Activated CD8-positive, alpha-beta T cell treated with anti-CD3 and anti-CD28 coated beads for 36 hours (primary cell): ENCODE measurements at regions of chr6 and their contacts with region 1.

Region 1: GRCh38 chr6:2353412-2354137 is 108.2 kb upstream of the GMDS start:
- DNase-seq: peak; percentile 80
- ATAC-seq: peak; percentile 56
- H3K4me3 Mint-ChIP-seq: no peak overlapping the region
- H3K27ac Mint-ChIP-seq: no peak overlapping the region
- H3K4me1 Mint-ChIP-seq: no peaks in the 10 kb centered on the region
- H3K27me3 Mint-ChIP-seq: no peaks in the 10 kb centered on the region
- CTCF ChIP-seq: peak; percentile 88

Region 2: DNA sequence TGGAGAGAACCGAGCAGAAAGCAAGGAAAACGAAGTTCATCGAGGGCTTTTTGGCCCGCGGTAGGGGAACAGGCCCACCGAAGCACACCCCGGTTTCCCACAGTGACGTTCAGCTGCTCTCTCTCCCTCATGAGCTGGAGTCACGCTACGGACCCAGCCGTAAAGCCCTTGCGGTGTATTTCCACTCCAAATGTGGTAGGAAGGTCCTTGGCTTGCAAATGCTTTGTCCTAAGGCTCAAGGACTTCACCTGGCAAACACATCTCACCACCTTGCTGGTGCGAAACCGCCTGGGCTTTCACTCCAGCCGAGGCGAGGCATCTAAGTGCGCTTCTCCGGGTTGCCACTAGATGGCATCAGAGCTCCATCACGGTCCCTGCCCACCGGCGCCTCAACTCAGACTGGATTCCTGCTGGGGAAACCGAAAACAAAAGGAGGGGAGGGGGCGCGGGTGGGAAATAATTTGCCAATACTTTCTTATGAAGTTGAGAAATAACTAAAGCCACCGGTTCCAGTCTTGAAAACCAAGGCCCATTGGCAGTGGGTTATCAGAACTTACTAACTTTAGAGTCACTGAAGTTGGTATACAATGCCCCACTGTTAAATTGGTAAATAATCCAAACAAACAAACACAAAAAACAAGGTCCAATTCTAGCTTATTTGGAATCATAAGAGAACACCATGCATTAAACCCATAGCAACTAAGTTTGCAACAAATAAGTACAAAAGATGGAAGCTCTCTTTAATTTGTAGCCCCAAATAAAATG is 757.3 kb before region 1 on chr6:
- CTCF ChIA-PET with region 1: interaction called, 23 read pairs
- POLR2A ChIA-PET with region 1: no interaction called
- intact Hi-C with region 1: loop called (anchors 5 kb)
- DNase-seq: peak; percentile 67
- ATAC-seq: peak; percentile 80
- H3K4me3 Mint-ChIP-seq: no peak overlapping the region
- H3K27ac Mint-ChIP-seq: no peak overlapping the region
- H3K4me1 Mint-ChIP-seq: no peaks in the 10 kb centered on the region
- H3K27me3 Mint-ChIP-seq: peaks cover 48% of the 10 kb centered on the region
- CTCF ChIP-seq: peak; percentile 92

Region 3: DNA sequence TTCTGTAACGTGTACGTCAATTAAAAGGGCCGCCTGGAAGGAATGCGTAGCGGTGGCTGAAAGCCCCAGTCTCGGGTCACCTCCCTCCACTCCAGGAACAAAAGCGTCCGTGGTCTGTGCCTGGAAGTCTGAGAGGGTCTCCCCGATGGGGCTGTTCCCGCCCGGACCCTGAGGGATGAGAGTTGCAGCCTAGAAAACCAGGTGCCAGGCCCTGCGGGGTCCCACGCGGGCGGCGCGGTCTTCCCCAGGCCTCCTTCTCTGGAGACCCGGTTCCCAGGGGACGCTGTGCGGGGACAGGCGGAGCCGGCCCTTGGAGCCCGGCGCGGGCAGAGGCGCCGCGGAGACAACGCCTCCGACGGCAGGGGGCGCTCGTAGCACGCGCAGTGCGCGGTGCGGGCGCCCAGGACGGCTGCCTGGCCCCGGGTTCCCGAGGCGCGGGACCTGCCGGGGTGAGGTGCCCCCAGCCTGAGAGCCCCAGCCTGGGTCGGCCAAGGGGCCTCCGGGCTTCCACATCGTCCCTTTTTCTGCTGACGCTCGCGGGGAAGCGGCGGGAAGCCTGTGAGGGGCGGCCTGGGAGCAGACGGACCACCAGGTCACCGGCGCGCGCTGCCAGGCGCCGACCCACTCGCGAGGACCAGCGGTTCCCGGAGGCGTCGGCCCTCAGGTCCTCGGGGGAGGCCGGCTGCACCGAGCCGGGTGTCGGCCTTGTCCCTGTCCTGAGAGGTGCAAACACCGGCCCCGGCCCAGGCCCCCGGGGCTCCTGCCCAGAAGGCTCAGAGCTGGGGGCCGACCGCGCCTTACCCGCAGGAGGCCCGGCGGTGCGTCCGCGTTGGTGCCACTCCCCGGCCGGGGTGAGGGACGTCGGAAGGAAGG is 749.2 kb before region 1 on chr6:
- CTCF ChIA-PET with region 1: interaction called, 11 read pairs
- POLR2A ChIA-PET with region 1: no interaction called
- intact Hi-C with region 1: loop called (anchors 5 kb)
- DNase-seq: peak; percentile 58
- ATAC-seq: peak; percentile 76
- H3K4me3 Mint-ChIP-seq: no peak overlapping the region
- H3K27ac Mint-ChIP-seq: no peak overlapping the region
- H3K4me1 Mint-ChIP-seq: peaks cover 34% of the 10 kb centered on the region
- H3K27me3 Mint-ChIP-seq: peaks cover 78% of the 10 kb centered on the region
- CTCF ChIP-seq: peak; percentile 89

Region 4: DNA sequence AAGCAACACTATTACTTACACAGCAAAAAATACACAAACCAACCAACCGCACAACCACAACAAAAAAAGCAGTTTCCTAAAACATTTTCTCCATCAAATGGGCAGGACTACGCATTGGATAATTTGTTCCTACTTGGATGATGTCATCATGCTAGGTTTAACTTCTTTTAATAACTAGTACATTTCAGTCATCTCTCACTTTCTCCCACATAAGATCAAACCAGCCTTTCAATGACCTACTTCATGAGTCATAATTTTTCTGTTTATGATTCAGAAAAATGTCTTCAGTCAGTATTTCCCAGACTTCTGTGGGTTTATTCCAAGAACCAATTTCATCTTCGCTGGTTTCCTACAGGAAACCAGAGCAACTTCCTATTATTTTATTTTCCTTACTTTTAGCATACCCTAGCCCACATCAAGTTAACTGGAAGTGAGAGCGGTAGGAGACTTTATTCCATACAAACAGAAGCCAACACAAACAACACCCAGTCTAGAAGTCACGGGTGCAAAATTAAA is 242.4 kb before region 1 on chr6:
- CTCF ChIA-PET with region 1: interaction called, 5 read pairs
- POLR2A ChIA-PET with region 1: no interaction called
- intact Hi-C with region 1: loop called (anchors 10 kb)
- DNase-seq: peak; percentile 34
- ATAC-seq: peak; percentile 89
- H3K4me3 Mint-ChIP-seq: peak overlapping the region; percentile 71
- H3K27ac Mint-ChIP-seq: peak overlapping the region; percentile 89
- H3K4me1 Mint-ChIP-seq: peaks cover 40% of the 10 kb centered on the region
- H3K27me3 Mint-ChIP-seq: no peaks in the 10 kb centered on the region
- CTCF ChIP-seq: no peak

Region 5: GRCh38 chr6:2209226-2209809 is 144.3 kb before region 1 on chr6:
- CTCF ChIA-PET with region 1: interaction called, 41 read pairs
- POLR2A ChIA-PET with region 1: no interaction called
- intact Hi-C with region 1: no loop called
- DNase-seq: peak; percentile 66
- ATAC-seq: peak; percentile 87
- H3K4me3 Mint-ChIP-seq: no peak overlapping the region
- H3K27ac Mint-ChIP-seq: no peak overlapping the region
- H3K4me1 Mint-ChIP-seq: peaks cover 2% of the 10 kb centered on the region
- H3K27me3 Mint-ChIP-seq: no peaks in the 10 kb centered on the region
- CTCF ChIP-seq: peak; percentile 49